Activated CD4-positive, alpha-beta T cell treated with anti-CD3 and anti-CD28 coated beads, Interleukin-2, amount 10 ng/mL, durations not matched to agents 7 days and 5 days (primary cell): ENCODE measurements at regions of chr6 and their contacts with region 1.

Region 1: DNA sequence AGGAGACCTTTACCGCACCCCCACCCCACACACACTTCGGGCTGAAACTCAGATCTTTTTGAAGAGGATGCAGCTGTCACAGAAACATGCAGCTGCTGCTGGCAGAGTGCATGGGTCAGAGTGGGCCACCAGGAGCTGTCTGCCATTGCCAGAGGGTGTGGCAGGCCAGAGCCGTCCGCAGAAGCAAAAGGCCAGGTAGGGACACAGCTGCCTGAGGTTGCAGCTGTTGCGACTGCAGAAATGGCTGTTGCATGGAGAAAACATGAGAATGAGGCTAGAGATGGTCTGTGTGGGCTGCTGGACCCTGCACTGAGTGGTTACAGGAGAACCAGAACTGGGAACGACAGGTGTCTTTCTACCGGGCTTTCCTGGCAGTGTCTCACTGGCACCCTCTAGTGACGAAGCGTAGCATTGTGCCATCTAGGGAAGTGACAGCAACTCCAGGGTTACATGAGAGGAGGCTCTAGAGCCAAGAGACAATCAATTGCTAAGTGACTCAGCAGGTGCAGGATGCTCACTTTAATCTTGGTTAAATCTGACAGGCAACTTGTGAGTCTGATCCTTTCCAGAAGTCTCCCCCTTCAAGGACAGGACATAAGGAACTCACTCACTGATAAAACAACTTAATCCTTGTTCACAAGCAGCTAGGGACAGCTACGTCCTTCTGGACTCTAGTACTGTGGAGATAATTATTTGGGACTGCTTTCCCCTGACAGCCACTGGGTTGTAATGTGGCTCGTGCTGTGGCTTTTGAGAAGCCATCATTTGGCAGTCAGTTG is 29.1 kb upstream of the SERPINB9 start:
- DNase-seq: peak; percentile 90
- H3K4me3 Mint-ChIP-seq: no peak overlapping the region
- H3K27ac Mint-ChIP-seq: peak overlapping the region; percentile 48
- H3K4me1 Mint-ChIP-seq: peaks cover 24% of the 10 kb centered on the region
- H3K27me3 Mint-ChIP-seq: no peaks in the 10 kb centered on the region

Region 2: DNA sequence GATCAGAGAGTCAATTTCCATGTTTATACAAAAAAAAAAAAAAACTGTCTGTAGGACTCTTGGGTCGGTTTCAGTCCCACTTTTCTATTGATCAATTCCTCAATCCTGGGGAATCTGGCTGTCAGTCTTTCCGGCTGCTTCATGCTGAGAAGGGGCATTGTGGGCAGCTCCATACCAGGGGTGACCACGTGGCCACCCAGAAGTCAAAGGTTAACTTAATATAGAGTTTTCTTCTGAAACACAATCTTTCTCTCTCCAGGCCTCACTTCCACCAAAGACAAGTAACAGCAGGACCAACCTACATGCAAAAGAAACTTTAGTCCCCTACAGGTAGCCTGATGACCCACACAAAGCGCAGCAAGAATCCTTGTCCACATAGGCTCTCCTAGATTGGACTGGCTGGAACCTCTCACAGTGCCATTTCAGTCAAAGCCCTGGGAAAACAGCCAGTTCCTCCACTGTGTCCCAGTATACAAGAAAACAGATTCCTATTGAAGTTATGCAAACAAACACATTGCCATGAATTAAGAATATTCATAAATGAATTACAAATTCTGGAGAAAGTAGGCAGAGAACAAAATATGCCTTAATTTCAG is 10.5 kb before region 1 on chr6:
- CTCF ChIA-PET with region 1: interaction called, 13 read pairs
- POLR2A ChIA-PET with region 1: no interaction called
- DNase-seq: no peak
- H3K4me3 Mint-ChIP-seq: no peak overlapping the region
- H3K27ac Mint-ChIP-seq: no peak overlapping the region
- H3K4me1 Mint-ChIP-seq: peaks cover 23% of the 10 kb centered on the region
- H3K27me3 Mint-ChIP-seq: peaks cover 10% of the 10 kb centered on the region